ENCODE measurements at regions of chr1 and their contacts with region 1.

Region 1: DNA sequence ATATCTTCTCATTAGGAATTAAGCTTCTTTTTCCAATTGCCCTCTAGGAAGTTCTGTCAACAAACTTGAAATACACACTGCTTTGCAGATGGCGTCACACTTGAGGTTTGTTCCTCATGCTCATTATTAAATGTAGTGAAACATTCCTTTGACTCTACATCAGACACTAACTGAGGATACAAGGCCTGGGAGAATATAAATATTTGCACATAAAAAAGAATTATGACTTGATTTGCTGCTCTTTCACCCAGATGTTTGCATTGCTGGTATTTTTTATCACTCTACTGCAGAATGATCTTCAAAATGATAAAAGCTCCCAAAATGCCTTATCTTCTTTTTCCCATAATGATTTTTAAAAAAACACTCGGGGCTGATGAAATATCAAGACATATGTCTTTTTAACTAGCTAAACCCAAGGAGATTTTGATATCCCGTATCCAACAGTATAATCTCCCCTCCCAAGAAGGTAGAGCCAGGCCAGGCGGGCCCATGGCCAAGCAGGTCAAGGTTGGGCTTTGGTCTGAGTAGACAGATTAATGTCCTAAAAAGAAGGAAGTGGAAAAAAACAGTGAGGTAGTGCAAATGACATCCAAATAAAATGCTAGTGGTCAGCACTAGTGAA is 264.6 kb downstream of the HHIPL2 start:
- DNase-seq: no peak
- ATAC-seq: no peak

Region 2: DNA sequence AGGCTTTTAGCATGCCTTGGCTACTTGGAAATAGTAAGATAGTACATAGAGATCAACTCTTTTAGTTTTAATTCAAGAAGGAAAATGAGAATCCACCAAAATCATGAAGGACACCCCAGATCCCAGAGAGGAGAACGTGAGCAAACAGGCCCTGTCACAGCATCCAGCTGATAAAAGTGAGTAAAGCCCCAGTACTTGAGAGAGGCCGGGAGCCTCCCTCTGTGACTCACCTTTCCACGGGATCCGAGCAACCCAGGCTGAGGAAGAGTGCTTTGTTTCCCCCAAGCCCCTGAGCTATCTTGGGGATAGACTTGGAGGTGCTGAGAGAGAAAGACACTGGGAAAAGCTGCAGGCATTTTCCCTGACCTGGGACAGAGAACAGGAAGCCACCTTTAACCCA is 780.0 kb before region 1 on chr1:
- intact Hi-C with region 1: loop called (anchors 5 kb)
- DNase-seq: no peak
- ATAC-seq: no peak

Region 3: GRCh38 chr1:222928212-222928611 is 645.0 kb after region 1 on chr1:
- intact Hi-C with region 1: no loop called
- DNase-seq: peak; percentile 71
- ATAC-seq: peak; percentile 93